HepG2 (cell line): ENCODE measurements at regions of chr22 and their contacts with region 1.

Region 1: GRCh38 chr22:25702040-25702439 is 39.9 kb upstream of the MYO18B start:
- DNase-seq: peak; percentile 18
- ATAC-seq: no peak
- H3K4me3 ChIP-seq: no peak overlapping the region
- H3K27ac ChIP-seq: no peak overlapping the region
- H3K4me1 ChIP-seq: no peaks in the 10 kb centered on the region
- H3K27me3 ChIP-seq: no peaks in the 10 kb centered on the region
- CTCF ChIP-seq: peak; percentile 45
- EP300 ChIP-seq: no peak
- POLR2A ChIP-seq: no peak
- RAD21 ChIP-seq: no peak

Region 2: GRCh38 chr22:25465949-25466348 is 236.1 kb before region 1 on chr22:
- CTCF ChIA-PET with region 1: interaction called, 13 read pairs
- POLR2A ChIA-PET with region 1: no interaction called
- in situ Hi-C with region 1: loop called (anchors 5 kb)
- intact Hi-C with region 1: no loop called
- DNase-seq: no peak
- ATAC-seq: no peak
- H3K4me3 ChIP-seq: no peak overlapping the region
- H3K27ac ChIP-seq: no peak overlapping the region
- H3K4me1 ChIP-seq: no peaks in the 10 kb centered on the region
- H3K27me3 ChIP-seq: no peaks in the 10 kb centered on the region
- CTCF ChIP-seq: no peak
- EP300 ChIP-seq: no peak
- POLR2A ChIP-seq: no peak
- RAD21 ChIP-seq: no peak

Region 3: DNA sequence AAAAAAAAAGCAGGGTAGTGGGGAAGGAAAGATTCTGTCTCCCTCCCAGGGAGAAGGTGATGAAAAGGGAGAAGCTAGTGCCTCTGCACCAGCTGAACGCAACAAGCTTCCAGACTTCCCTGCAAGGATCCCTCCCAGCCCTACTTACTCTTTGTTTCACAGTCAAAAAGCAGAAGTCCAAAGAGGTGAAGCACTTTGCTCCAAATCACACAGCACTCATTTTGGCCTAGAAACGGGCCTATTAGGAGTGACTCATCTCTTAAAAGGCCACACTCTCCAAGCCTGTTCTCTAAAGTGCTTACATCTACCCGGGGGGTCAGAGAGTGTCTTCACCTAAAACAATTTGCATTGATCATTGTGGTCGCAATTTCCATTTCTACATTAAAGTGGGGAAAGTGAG is 155.3 kb before region 1 on chr22:
- CTCF ChIA-PET with region 1: interaction called, 9 read pairs
- POLR2A ChIA-PET with region 1: no interaction called
- in situ Hi-C with region 1: no loop called
- intact Hi-C with region 1: loop called (anchors 1 kb)
- DNase-seq: no peak
- ATAC-seq: no peak
- H3K4me3 ChIP-seq: no peak overlapping the region
- H3K27ac ChIP-seq: no peak overlapping the region
- H3K4me1 ChIP-seq: peaks cover 35% of the 10 kb centered on the region
- H3K27me3 ChIP-seq: no peaks in the 10 kb centered on the region; a peak in 1 of 5 replicates
- CTCF ChIP-seq: no peak
- EP300 ChIP-seq: no peak
- POLR2A ChIP-seq: no peak
- RAD21 ChIP-seq: no peak

Region 4: DNA sequence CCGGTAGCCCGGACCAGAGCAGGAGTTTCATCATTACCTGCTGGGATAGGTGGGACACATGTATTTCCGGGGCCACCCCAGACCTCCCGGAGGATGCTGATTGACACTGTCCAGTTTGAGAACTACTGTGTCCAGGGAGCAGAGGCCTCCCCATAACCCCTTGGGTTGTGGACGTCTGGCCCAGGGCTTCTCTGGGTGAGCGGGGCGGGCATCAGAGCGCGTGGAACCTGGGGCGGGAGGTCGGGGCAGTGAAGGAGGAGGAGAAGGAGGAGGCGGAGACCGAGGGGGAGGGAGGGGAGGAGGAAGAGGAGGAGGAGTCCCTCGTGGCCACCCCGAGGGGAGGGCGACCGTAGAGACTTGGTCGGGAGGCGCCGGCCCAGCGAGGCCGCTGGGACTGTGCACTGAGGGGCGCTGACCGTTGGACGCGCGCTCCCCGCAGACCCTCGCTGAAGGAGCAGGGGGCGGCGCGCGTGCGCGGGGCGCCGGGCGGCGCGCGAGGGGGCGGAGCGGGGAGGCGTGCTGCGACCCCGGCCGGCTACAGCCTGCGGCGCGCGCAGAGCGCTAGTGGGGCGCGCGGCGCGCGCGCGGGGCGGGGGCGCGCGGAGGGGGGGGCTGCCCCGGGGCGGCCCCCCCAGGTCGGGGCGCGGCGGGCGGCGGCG is 137.6 kb before region 1 on chr22 and contains the start of gene GRK3:
- CTCF ChIA-PET with region 1: no interaction called
- POLR2A ChIA-PET with region 1: no interaction called
- in situ Hi-C with region 1: no loop called
- intact Hi-C with region 1: loop called (anchors 2 kb)
- DNase-seq: no peak
- ATAC-seq: peak; percentile 78
- H3K4me3 ChIP-seq: peak within 1 kb of the TSS; percentile 84 to 92 (median 91)
- H3K27ac ChIP-seq: peak within 1 kb of the TSS; percentile 66
- H3K4me1 ChIP-seq: peaks cover 57% of the 10 kb centered on the region
- H3K27me3 ChIP-seq: no peaks in the 10 kb centered on the region; a peak in 1 of 5 replicates
- CTCF ChIP-seq: no peak
- EP300 ChIP-seq: no peak
- POLR2A ChIP-seq: peak in 1 of 2 experiments; percentile 71; a peak in 2 of 4 replicates
- RAD21 ChIP-seq: no peak
- total RNA-seq, gene GRK3: 16.7 and 23.6 TPM in 2 replicates

Region 5: GRCh38 chr22:25774575-25775026 is 72.6 kb after region 1 on chr22:
- CTCF ChIA-PET with region 1: interaction called, 3 read pairs
- POLR2A ChIA-PET with region 1: no interaction called
- in situ Hi-C with region 1: no loop called
- intact Hi-C with region 1: loop called (anchors 5 kb)
- DNase-seq: no peak
- ATAC-seq: peak; percentile 77
- H3K4me3 ChIP-seq: no peak overlapping the region
- H3K27ac ChIP-seq: no peak overlapping the region
- H3K4me1 ChIP-seq: 0 out of 2 replicates have a peak, but pooled peaks cover 6% of the 10 kb centered on the region
- H3K27me3 ChIP-seq: peaks cover 2 to 18% of the 10 kb centered on the region in 2 experiments; a peak in 3 of 5 replicates
- CTCF ChIP-seq: peak; percentile 91
- EP300 ChIP-seq: no peak
- POLR2A ChIP-seq: no peak
- RAD21 ChIP-seq: peak; percentile 60